ENCODE measurements at regions of chr7 and their contacts with region 1.

Region 1: DNA sequence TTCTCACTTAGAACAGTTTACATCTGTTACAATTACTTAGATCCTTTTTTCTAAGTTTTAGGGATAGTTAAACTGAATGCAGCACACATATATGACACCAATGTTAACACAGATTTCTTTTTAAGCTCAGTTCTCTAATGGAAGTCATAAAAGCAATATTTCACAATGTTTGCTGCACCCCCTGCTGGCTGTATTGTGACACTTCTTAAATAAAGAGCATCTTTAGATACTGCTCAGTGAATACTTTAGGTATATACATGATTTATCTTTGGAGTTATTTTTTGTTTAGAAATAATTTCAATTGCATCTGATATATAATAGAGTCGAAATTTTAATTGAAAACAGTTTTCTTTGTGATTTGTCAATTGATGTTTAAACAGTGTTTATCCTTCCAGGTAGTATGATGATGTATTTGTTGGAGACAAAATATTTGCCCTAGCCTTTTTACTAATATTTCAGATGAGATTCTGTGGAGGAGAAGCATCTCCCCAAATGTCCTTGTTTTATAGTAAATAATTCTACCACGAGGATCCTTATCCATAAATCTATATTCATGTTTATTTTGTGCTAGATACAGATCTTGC is 174.4 kb downstream of the ST7 start:
- DNase-seq: peak in 1 of 3 donors; percentile 77
- ATAC-seq: peak; percentile 70
- H3K4me3 ChIP-seq: no peak overlapping the region
- H3K4me1 ChIP-seq: peaks cover 4% of the 10 kb centered on the region
- CTCF ChIP-seq: peak; percentile 53

Region 2: GRCh38 chr7:116929914-116930913 is 197.5 kb before region 1 on chr7:
- intact Hi-C with region 1: loop called in 1 of 2 experiments (anchors 10 kb)
- DNase-seq: peak; percentile 70 to 83 (median 81)
- ATAC-seq: peak; percentile 95
- H3K4me3 ChIP-seq: no peak overlapping the region
- H3K4me1 ChIP-seq: no peaks in the 10 kb centered on the region
- CTCF ChIP-seq: peak; percentile 88

Measured in mucosa of descending colon (tissue), 3 donors.